Activated CD8-positive, alpha-beta memory T cell treated with anti-CD3 and anti-CD28 coated beads, Interleukin-2, amount 10 ng/mL, durations not matched to agents 7 days and 5 days (primary cell): ENCODE measurements at regions of chr10 and their contacts with region 1.

Region 1: GRCh38 chr10:91298224-91298871 is 77.9 kb downstream of the PCGF5 start:
- DNase-seq: peak; percentile 87
- ATAC-seq: peak; percentile 94
- H3K4me3 Mint-ChIP-seq: peak overlapping the region; percentile 61
- H3K27ac Mint-ChIP-seq: no peak overlapping the region
- H3K4me1 Mint-ChIP-seq: peaks cover 14% of the 10 kb centered on the region
- H3K27me3 Mint-ChIP-seq: peaks cover 28% of the 10 kb centered on the region

Region 2: GRCh38 chr10:91006001-91006751 is 292.2 kb before region 1 on chr10:
- CTCF ChIA-PET with region 1: interaction called, 11 read pairs
- DNase-seq: peak; percentile 75
- ATAC-seq: peak; percentile 71
- H3K4me3 Mint-ChIP-seq: peak overlapping the region; percentile 33
- H3K27ac Mint-ChIP-seq: peak overlapping the region; percentile 66
- H3K4me1 Mint-ChIP-seq: peaks cover 31% of the 10 kb centered on the region
- H3K27me3 Mint-ChIP-seq: peaks cover 33% of the 10 kb centered on the region

Region 3: DNA sequence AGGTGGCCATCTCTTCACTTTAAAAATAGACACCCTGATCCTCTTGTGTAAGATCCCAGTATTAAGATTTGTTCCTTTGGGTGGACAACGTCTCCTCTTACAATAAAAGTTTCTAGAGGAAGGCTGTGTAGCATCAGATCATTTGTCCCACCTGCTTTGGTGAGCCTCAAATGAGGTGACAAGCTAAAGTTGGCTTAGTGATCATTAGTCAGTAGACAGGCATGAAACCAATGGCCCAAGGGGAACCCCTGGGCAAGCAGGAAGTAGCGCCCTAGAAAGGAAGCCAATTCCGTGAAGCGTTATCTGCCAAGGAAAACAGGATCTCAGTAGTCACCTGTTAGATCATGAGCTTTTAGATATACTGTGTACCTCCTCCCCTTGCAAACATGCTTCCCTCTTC is 11.1 kb before region 1 on chr10:
- CTCF ChIA-PET with region 1: interaction called, 15 read pairs
- DNase-seq: no peak
- ATAC-seq: no peak
- H3K4me3 Mint-ChIP-seq: no peak overlapping the region
- H3K27ac Mint-ChIP-seq: no peak overlapping the region
- H3K4me1 Mint-ChIP-seq: no peaks in the 10 kb centered on the region
- H3K27me3 Mint-ChIP-seq: no peaks in the 10 kb centered on the region

Region 4: GRCh38 chr10:91389636-91390512 is 91.5 kb after region 1 on chr10:
- CTCF ChIA-PET with region 1: interaction called, 20 read pairs
- DNase-seq: no peak
- ATAC-seq: peak; percentile 94
- H3K4me3 Mint-ChIP-seq: no peak overlapping the region
- H3K27ac Mint-ChIP-seq: peak overlapping the region; percentile 52
- H3K4me1 Mint-ChIP-seq: peaks cover 3% of the 10 kb centered on the region
- H3K27me3 Mint-ChIP-seq: peaks cover 22% of the 10 kb centered on the region

Region 5: DNA sequence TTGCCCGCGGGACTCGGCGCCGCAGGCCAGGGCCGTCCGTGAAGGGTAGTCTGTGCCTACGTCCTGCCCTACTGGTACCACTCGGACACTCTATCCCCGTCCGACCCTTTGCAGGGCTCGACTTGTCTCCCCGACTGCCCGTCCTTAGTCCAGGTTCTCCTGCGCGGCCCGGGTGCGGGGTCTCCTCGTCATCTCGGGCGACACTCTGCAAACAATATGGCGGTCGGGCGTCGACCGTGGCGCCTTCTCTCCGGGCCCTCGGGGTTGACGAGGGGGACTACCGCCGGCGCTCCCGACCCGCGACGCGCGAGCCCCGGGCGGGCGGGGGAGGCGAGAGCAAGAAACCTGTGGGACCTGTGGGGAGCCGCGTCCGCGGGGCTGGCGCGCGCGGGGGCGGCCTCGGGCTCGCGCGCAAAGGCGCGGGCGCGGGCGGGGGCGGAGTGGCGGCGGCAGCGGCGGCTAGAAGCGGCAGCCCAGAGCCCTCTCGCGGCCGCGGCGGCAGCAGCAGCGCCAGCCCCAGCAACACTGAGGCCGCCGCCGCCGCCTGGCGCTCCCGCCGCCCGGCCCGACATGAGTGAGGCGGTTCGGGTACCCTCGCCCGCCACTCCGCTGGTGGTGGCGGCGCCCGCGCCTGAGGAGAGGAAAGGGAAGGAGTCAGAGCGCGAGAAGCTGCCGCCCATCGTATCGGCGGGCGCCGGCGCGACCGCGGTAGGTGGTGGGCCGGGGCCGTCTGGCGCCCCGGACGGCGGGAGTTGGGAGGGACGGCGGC is 111.7 kb after region 1 on chr10 and contains the start of gene HECTD2:
- CTCF ChIA-PET with region 1: interaction called, 10 read pairs
- DNase-seq: peak; percentile 82
- ATAC-seq: peak; percentile 87
- H3K4me3 Mint-ChIP-seq: peak within 1 kb of the TSS; percentile 79
- H3K27ac Mint-ChIP-seq: peak within 1 kb of the TSS; percentile 83
- H3K4me1 Mint-ChIP-seq: peaks cover 16% of the 10 kb centered on the region
- H3K27me3 Mint-ChIP-seq: peaks cover 20% of the 10 kb centered on the region
- total RNA-seq, gene HECTD2: 3.8 to 6.8 TPM

Region 6: DNA sequence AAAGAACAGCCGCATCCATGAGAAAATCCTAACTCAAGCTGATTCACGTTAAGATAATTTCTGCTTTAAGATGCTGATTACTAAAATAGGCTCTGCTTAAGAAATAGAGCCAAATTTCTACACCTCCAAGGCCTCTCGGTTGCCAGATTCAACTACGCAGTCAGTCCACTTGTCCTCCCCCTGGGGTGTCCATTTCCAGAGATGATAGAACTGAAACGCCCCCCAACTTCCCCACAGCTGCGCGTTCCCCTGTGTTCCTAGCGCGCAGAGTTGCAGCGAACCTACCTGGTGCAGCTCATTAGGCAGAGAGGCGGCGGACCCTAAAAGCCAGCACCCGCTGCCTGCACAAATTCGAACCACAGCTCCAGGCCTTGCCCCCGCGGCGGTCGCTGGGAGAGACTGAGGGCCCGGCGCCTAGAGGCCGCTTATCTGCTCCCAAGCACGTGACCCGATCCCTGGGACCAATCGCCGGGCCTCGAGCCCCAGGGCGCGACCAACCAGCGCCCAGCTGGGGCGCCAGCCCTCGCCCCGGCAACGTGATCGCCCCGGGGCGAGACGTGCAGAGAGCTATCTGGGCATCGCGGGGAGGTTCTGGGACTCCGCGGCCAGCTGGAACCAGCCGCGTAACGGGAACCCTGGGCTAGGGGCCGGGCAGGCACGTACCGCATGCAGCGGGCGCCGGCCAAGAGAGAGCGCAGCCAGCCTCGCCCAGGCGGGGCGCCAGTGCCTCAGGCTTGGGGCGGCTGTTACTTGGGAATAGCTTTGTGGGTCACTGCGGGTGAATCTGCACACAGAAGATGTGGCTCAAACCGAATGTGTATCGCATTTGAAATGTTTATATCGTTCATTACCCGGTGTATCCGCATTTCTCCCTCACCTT is 334.6 kb after region 1 on chr10 and contains the start of gene PPP1R3C:
- CTCF ChIA-PET with region 1: interaction called, 67 read pairs
- DNase-seq: peak; percentile 65
- ATAC-seq: peak; percentile 88
- H3K4me3 Mint-ChIP-seq: peak within 1 kb of the TSS; percentile 56
- H3K27ac Mint-ChIP-seq: no peak within 1 kb of the TSS
- H3K4me1 Mint-ChIP-seq: peaks cover 8% of the 10 kb centered on the region
- H3K27me3 Mint-ChIP-seq: peaks cover 67% of the 10 kb centered on the region
- total RNA-seq, gene PPP1R3C: not detected

Region 7: DNA sequence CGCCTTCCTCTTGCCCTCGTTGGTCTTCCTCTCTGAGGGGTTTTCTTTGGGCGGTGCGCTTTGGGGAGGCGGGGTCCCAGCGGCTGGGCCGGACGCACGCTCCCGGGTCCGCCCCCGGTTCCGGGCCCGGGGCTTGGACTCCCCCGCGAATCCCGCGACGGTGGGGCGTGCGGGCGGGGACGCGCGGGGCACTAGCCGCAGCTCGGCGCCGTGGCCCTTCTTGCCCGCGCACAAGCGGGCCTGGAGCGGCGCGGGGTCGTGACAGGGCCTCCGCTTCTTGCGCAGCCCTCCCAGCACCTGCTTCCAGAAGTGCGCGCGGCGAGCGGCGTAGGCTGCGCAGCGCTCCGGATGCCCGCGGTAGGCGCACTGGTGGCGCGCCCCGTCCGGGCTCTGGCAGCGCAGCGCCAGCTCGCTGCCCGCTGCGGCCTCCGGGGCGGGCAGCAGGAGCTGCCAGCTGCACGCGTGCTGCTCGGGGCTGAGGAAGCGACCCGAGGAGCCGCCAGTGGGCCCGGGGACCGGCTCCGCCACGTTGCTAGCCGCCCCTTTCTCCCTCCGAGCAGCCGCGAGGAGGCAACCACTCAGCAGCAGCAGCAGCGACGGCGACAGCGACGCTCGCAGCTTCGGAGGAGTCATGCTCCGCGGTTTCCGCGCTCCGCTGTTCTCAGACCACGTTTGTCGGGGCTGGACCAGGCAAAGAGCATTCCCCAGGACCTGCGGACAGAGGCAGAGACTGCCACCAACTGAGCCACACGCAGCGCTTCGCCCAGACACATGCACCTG is 610.2 kb after region 1 on chr10:
- CTCF ChIA-PET with region 1: interaction called, 18 read pairs
- DNase-seq: peak; percentile 84
- ATAC-seq: peak; percentile 89
- H3K4me3 Mint-ChIP-seq: peak overlapping the region; percentile 84
- H3K27ac Mint-ChIP-seq: peak overlapping the region; percentile 81
- H3K4me1 Mint-ChIP-seq: peaks cover 30% of the 10 kb centered on the region
- H3K27me3 Mint-ChIP-seq: peaks cover 10% of the 10 kb centered on the region